GM18951 (cell line): ENCODE measurements at regions of chr3 and their contacts with region 1.

Region 1: DNA sequence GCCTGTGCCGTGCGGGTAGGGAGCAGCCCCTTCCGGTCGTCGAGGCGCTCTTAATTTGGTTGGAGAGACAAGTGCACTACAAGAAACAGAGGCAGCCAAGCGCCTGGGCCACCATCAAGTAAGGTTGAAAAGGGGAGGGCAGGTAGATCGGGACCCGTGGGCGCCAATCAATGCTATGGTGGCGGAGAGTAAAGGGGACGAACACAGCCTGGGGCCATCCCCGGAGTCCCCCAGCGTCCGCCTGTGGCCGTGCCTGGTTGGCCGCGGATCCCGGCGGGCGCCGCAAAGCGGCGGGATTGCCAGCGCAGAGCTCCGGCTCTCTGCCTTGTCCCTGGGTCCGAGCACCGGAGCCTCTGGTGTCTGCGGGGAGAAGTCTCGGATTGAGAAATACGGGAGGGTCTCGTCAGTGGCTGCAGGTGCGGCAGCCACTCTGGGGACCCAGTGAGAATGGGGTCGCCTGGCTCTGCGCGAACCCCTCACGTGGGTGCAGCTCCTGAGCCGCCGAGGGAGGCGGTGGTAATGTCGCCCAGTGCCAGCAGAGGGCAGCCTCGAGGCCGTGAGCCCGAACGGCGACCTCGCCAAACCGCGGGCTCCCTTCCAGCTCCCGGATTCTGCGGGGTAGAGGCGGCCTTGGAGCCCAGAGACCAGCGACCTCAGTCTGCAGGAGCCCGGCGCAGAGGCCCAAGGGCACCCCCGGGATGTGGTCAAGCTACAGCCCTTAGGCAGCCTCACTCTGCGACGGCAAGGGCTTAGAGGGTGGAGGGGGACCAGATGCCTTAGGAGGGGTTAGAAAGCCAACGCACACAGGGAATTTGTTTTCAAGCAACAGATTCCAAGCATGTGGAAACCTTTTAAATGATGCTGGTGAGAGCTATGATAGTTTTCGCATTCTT is 10.8 kb downstream of the FOXL2 start:
- POLR2A ChIP-seq: no peak

Region 2: GRCh38 chr3:138468886-138469285 is 467.2 kb before region 1 on chr3:
- in situ Hi-C with region 1: loop called (anchors 25 kb)
- POLR2A ChIP-seq: no peak

Region 3: GRCh38 chr3:138578141-138578540 is 358.0 kb before region 1 on chr3:
- in situ Hi-C with region 1: no loop called
- POLR2A ChIP-seq: no peak

Region 4: GRCh38 chr3:138673641-138674530 is 262.2 kb before region 1 on chr3:
- in situ Hi-C with region 1: no loop called
- POLR2A ChIP-seq: no peak